ENCODE measurements at regions of chr20 and their contacts with region 1.

Region 1: GRCh38 chr20:2470423-2471193 is at the start of gene SNRPB:
- DNase-seq: peak; percentile 97
- CTCF ChIP-seq: no peak

Region 2: DNA sequence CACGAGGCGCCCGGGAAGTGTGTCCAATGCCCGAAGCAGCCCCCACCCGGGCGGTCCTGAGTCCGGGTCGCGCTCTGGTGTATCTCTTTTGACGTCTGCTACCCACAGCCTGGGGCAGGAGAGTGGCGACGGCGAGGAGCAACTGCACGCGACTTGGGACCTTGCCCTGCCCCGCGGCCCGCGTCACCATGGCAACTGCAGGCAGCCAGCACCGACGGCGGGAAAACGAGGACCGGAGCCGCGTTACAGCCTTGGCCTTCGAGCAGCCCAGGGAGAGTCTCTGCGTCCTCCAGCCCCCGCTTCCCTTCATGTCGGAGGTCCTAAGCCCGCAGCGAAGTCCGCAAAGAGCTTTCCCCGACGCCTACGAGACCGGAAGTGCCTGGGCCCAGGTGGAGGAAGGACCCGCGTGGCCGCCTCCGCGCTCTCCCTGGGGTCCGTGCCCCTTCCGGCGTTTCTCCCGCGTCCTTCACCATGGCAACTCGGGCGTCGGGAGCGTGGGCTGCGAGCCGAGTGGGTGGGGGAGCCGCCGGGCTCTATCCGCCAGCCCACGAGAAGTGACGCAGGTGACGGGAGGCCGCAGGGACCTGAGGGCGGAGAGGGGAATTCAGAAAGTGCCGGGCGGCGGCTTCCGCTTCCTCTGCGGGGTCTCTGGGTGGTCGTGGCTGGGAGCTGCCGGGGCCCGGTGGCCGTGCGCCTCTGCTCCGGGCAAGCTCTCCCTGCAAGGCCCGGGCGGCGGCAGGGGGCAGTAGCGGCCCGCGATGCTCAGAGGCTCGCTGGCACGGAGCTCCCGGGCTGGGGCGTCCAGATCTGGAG is 263.4 kb before region 1 on chr20:
- in situ Hi-C with region 1: loop called (anchors 25 kb)
- DNase-seq: peak; percentile 88
- CTCF ChIP-seq: peak; percentile 82

Measured in GM13976 (cell line).